ENCODE measurements at regions of chr16 and their contacts with region 1.

Region 1: DNA sequence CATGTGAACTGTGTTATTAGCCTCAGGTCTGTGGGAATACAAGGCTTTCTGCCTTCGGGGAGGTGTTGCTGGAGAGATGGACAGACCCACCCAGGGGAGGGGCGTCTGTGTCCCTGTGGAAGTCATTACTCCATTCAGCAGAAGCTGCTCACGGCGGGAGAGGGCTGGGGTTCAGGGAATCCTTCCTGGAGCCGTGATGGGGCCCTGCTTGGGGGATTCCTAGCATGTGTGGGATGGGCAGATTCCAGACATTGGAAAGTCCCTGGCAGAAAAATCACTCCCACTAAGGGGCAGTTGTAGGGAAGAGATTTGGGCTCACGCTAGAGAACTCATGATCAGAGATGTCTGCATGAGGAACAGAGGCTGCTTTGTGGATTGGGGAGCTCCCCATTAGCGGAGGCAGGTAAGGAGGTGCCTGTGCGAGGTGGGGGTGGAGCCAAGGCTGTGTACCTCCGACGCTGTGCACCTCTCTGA is 56.3 kb upstream of the IL34 start:
- DNase-seq: no peak
- H3K4me3 ChIP-seq: no peak overlapping the region
- H3K27ac ChIP-seq: no peak overlapping the region
- H3K4me1 ChIP-seq: peaks cover 9% of the 10 kb centered on the region; the same call in 1 of the 2 replicates
- H3K27me3 ChIP-seq: no peaks in the 10 kb centered on the region
- CTCF ChIP-seq: no peak

Region 2: GRCh38 chr16:70601576-70602575 is 11.8 kb after region 1 on chr16:
- CTCF ChIA-PET with region 1: no interaction called
- POLR2A ChIA-PET with region 1: interaction called, 21 read pairs
- intact Hi-C with region 1: no loop called
- DNase-seq: no peak
- H3K4me3 ChIP-seq: no peak overlapping the region
- H3K27ac ChIP-seq: no peak overlapping the region
- H3K4me1 ChIP-seq: no peaks in the 10 kb centered on the region
- H3K27me3 ChIP-seq: no peaks in the 10 kb centered on the region
- CTCF ChIP-seq: no peak

Region 3: DNA sequence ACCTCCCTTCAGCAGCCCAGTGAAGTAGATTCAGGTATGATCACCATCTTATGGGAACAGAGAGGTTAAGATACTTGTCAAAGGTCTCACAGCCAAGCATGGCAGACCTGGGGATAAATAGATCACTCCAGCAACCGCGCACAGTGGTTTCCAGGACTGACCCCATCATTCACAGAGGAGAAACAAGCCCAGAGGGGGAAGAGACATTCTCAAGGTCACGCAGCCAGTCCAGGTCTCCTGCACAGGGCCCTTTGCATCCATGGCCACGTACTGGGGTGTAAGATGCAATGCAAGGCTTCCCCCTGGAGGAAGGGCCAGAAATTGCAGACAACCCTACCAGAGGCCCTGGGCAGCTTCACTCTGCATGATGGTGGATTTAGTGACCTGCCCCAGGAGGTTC is 831.9 kb after region 1 on chr16:
- CTCF ChIA-PET with region 1: no interaction called
- POLR2A ChIA-PET with region 1: no interaction called
- intact Hi-C with region 1: loop called (anchors 5 kb)
- DNase-seq: peak in 1 of 2 experiments; percentile 32
- H3K4me3 ChIP-seq: no peak overlapping the region
- H3K27ac ChIP-seq: no peak overlapping the region
- H3K4me1 ChIP-seq: no peaks in the 10 kb centered on the region
- H3K27me3 ChIP-seq: peaks cover 24% of the 10 kb centered on the region; the same call in 1 of the 2 replicates
- CTCF ChIP-seq: peak; percentile 66

Measured in PC-9 (cell line).